ENCODE measurements at regions of chr6 and their contacts with region 1.

Region 1: GRCh38 chr6:34154668-34155447 is 9.0 kb upstream of the GRM4 start:
- DNase-seq: peak; percentile 53
- H3K4me3 ChIP-seq: peak overlapping the region in 1 of 4 donors; percentile 37
- H3K27ac ChIP-seq: no peak overlapping the region
- H3K4me1 ChIP-seq: peaks cover 3 to 7% (median 6%) of the 10 kb centered on the region in 4 donors
- H3K27me3 ChIP-seq: peaks cover 65% of the 10 kb centered on the region
- CTCF ChIP-seq: peak; percentile 89 to 99 (median 97)
- EP300 ChIP-seq: no peak
- POLR2A ChIP-seq: no peak

Region 2: GRCh38 chr6:33585403-33586107 is 569.3 kb before region 1 on chr6:
- in situ Hi-C with region 1: no loop called
- intact Hi-C with region 1: loop called (anchors 5 kb)
- DNase-seq: peak; percentile 91
- H3K4me3 ChIP-seq: no peak overlapping the region
- H3K27ac ChIP-seq: no peak overlapping the region
- H3K4me1 ChIP-seq: peaks cover 23 to 28% (median 27%) of the 10 kb centered on the region in 4 donors
- H3K27me3 ChIP-seq: no peaks in the 10 kb centered on the region
- CTCF ChIP-seq: peak; percentile 97 to 100 (median 99)
- EP300 ChIP-seq: no peak
- POLR2A ChIP-seq: no peak

Region 3: DNA sequence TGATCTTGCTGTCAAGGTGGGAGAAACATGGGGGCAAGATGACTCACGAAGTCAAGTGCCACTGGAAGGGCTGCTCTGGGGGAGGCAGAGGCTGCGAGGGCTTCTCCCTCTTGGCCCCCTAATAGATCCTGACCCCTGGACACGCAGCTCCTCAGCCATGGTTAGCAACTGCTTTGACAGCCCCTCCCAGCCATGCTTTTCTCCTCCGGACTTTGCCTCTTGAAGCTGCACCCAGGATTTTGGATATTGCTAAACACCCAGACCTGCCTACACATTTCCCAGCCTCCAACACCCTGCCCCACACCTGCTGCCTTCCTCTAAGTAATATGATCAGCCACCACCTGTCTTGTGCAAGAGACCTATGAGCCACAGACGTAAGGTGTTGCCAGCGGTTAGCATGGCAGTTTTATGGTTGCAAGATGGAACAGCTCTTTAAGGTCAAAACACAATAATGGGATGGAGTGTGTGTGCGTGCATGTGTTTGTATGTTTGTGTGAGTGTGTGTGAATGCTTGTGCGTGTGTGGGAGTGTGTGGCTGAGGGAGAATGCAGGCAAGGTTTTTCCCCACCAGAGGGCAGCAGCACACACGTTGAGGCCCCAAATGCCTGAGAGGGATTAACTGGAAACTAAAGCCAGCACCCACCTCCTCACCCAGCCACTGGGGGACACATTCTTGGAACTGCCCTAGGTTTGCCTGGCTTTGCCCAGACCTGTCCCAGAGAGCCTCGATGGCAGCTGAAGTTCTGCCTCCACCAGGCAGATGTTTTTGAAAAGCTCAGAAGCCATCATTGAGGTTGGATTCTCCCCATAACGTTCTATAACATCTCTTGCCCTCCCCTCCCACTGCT is 410.6 kb before region 1 on chr6:
- in situ Hi-C with region 1: no loop called
- intact Hi-C with region 1: loop called (anchors 10 kb)
- DNase-seq: peak; percentile 85
- H3K4me3 ChIP-seq: peak overlapping the region in 1 of 4 donors; percentile 30
- H3K27ac ChIP-seq: peak overlapping the region; percentile 71 to 85 (median 81)
- H3K4me1 ChIP-seq: peaks cover 20 to 30% (median 21%) of the 10 kb centered on the region in 4 donors
- H3K27me3 ChIP-seq: no peaks in the 10 kb centered on the region
- CTCF ChIP-seq: peak; percentile 86 to 98 (median 88)
- EP300 ChIP-seq: no peak
- POLR2A ChIP-seq: no peak

Region 4: DNA sequence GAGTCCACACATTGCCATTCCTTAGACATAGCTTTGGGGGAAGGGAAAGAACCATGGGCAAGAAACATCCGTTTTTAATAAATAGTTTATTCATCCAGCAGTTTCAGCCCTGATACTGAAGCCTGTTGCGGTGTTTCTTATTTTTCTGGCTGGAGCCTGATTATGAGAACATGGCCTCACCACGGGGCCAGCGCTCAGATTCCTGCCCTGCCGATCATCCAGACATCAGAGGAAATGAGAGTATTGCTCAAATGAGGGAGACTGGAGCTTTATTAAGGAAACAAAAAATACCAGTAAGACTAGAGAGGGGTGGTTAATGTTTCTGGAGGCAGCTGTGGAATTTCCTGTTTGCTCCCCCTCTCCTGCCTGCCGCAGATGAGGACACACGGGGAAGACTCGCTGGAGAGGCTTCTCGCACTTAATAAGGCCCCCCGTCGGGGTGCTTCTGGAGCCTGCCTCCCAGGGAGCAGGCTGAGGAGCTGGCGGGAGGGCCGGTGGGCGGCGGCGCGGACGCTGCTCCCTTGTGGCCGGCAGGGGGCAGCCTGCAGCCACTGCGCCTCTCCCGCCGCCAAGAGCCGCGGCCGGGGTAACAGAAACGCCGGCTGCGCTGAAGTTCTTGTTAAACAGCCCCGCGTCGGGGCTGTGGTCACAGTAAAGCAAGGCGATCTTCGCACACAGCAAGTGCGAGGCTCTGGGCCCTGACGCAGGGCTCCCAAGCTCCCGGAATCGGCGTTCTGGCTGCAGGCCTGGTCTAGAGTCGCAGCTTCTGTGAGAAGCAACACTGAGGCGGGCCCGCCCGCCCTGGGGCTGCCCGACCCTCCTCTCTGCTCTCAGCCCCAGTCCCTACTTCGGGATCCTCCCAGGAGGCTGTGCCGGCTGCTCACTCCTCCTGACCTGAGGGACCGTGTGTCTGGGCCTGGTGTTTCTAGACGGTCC is 383.4 kb before region 1 on chr6:
- in situ Hi-C with region 1: loop called in 3 of 4 experiments (anchors 10 to 25 kb)
- intact Hi-C with region 1: loop called (anchors 2 kb)
- DNase-seq: peak; percentile 69
- H3K4me3 ChIP-seq: no peak overlapping the region
- H3K27ac ChIP-seq: peak overlapping the region; percentile 48 to 75 (median 64)
- H3K4me1 ChIP-seq: peaks cover 17 to 34% (median 23%) of the 10 kb centered on the region in 4 donors
- H3K27me3 ChIP-seq: no peaks in the 10 kb centered on the region
- CTCF ChIP-seq: peak; percentile 86 to 98 (median 96)
- EP300 ChIP-seq: no peak
- POLR2A ChIP-seq: no peak

Region 5: DNA sequence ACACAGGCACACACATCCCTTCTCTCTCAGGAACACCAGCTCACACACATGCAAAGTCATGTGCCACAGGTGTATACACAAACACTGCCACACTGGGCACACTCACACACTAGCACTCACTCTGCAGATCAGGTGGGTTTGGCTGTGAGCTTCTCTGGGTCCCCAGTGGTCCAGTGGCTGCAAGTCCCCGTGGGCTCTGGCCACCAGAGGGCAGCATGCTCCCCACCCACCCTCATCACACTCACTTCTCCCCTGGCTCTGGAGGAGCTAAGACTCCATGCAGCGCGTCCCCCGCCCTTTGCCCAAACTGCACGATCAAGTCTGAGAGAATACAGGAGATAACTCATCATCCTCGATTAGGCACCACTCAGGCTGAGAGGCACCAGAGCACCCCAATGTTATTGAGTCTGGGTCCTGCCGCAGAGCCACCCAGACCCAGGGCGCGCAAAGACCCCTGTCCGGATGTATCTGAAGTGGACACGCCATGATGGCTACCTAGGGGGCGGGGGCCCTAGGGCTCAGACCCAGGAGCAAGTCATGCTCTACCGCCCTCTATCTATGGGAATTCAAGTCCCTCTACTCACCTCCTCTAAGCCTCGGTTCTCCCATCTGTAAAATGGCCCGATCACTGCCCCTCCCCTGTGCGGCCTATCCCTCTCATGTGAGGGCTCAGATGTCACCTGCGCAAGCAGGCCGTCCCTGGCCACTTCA is 99.5 kb before region 1 on chr6:
- in situ Hi-C with region 1: loop called in 1 of 4 experiments (anchors 10 kb)
- intact Hi-C with region 1: loop called (anchors 5 kb)
- DNase-seq: peak; percentile 63
- H3K4me3 ChIP-seq: no peak overlapping the region
- H3K27ac ChIP-seq: no peak overlapping the region
- H3K4me1 ChIP-seq: peaks cover 0 to 7% (median 2%) of the 10 kb centered on the region in 4 donors
- H3K27me3 ChIP-seq: no peaks in the 10 kb centered on the region
- CTCF ChIP-seq: peak; percentile 45 to 71 (median 64)
- EP300 ChIP-seq: no peak
- POLR2A ChIP-seq: no peak